ENCODE measurements at regions of chr17 and their contacts with region 1.

Region 1: DNA sequence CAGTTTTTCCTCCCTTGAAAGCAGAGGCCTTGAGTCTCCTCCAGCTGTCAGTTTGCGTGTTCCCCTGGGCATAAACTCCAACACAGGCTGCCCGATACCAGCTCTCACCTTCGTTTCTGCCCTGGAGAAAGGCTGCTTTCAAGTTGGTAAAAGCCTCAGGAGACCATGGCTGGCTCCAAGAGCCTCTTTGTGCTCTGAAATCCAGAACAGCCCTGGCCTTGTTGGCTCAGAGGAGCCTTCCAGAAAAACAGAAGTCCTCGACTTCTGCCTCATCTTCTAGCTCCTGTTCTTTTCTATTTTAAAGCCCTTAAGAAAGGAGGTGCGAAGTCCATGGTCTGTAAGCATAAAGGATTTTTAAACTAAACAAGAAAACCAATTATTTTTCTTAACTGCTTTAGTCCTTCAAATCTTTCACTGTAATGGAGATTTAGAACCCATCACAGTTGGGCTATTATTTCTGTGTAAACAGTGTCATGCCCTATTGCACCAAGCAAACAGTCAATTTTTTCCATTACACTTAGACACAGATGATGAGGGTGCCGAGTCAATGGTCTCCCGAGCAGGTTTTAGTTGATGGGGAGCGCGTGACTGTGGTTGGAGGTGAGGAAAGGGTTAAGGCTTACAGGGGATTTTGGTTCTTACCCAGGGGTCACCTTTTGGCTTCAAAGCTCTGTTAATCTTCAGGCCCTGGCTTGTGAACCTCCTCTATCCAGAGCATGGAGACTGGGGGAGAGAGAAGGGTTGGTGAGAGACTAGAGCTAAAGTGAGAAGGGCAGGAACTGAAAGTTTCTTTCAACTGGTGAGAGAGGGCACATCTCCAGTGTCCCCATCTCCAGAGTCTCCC is 212.8 kb downstream of the MSI2 start:
- DNase-seq: no peak
- H3K4me3 ChIP-seq: no peak overlapping the region
- H3K27ac ChIP-seq: no peak overlapping the region
- H3K4me1 ChIP-seq: peaks cover 3 to 73% (median 53%) of the 10 kb centered on the region in 4 experiments
- H3K27me3 ChIP-seq: no peaks in the 10 kb centered on the region

Region 2: GRCh38 chr17:57455063-57455914 is 13.9 kb before region 1 on chr17:
- CTCF ChIA-PET with region 1: interaction called, 42 read pairs
- POLR2A ChIA-PET with region 1: interaction called, 4 read pairs
- DNase-seq: peak; percentile 96 to 100 (median 99)
- H3K4me3 ChIP-seq: peak overlapping the region in 4 of 7 experiments; percentile 19 to 39 (median 28)
- H3K27ac ChIP-seq: peak overlapping the region; percentile 77 to 85
- H3K4me1 ChIP-seq: peaks cover 22 to 93% (median 84%) of the 10 kb centered on the region in 4 experiments
- H3K27me3 ChIP-seq: no peaks in the 10 kb centered on the region

Region 3: GRCh38 chr17:57480438-57481196 is 11.5 kb after region 1 on chr17:
- CTCF ChIA-PET with region 1: interaction called, 29 read pairs
- POLR2A ChIA-PET with region 1: no interaction called
- DNase-seq: peak; percentile 40 to 78 (median 61)
- H3K4me3 ChIP-seq: no peak overlapping the region
- H3K27ac ChIP-seq: peak overlapping the region; percentile 4 to 69
- H3K4me1 ChIP-seq: peaks cover 6 to 83% (median 61%) of the 10 kb centered on the region in 4 experiments
- H3K27me3 ChIP-seq: no peaks in the 10 kb centered on the region

Region 4: DNA sequence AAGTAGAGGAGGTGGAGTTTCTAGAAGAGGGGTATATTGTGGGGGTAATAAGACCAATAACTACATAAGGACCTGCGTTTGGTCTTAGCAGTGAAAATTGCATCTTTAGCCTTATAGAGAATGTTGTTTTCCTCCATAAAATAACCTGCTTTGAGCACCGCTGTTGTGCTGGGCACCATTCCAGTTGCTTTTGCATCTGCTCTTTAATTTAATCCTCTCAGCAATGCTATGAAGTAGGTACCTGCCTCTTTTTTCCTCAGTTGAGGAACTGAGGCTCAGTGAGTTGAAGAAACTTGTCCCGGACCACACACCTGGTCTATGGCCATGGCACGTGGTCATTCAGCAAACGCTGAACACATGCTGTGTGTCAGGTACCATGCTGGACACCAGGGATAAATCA is 25.3 kb after region 1 on chr17:
- CTCF ChIA-PET with region 1: no interaction called
- POLR2A ChIA-PET with region 1: no interaction called
- DNase-seq: no peak
- H3K4me3 ChIP-seq: no peak overlapping the region
- H3K27ac ChIP-seq: no peak overlapping the region
- H3K4me1 ChIP-seq: peaks cover 10 to 82% (median 58%) of the 10 kb centered on the region in 4 experiments
- H3K27me3 ChIP-seq: no peaks in the 10 kb centered on the region